CD4-positive, alpha-beta memory T cell (primary cell): ENCODE measurements at regions of chr17 and their contacts with region 1.

Region 1: GRCh38 chr17:5281814-5282653 is at the start of gene RABEP1:
- DNase-seq: peak; percentile 90 to 93 (median 92)
- H3K4me3 ChIP-seq: peak within 1 kb of the TSS; percentile 28 to 54
- H3K4me3 Mint-ChIP-seq: peak within 1 kb of the TSS; percentile 88 to 95 (median 92)
- H3K27ac ChIP-seq: peak within 1 kb of the TSS; percentile 60
- H3K27ac Mint-ChIP-seq: peak within 1 kb of the TSS; percentile 90 to 95 (median 93)
- H3K4me1 ChIP-seq: peaks cover 43% of the 10 kb centered on the region
- H3K4me1 Mint-ChIP-seq: peaks cover 23 to 51% (median 33%) of the 10 kb centered on the region in 4 donors
- H3K27me3 ChIP-seq: no peaks in the 10 kb centered on the region
- H3K27me3 Mint-ChIP-seq: no peaks in the 10 kb centered on the region
- total RNA-seq, gene RABEP1: 53.9 to 54.2 TPM

Region 2: GRCh38 chr17:5264893-5265292 is 17.1 kb before region 1 on chr17:
- CTCF ChIA-PET with region 1: no interaction called
- POLR2A ChIA-PET with region 1: no interaction called
- intact Hi-C with region 1: no loop called
- DNase-seq: no peak
- H3K4me3 ChIP-seq: no peak overlapping the region
- H3K4me3 Mint-ChIP-seq: no peak overlapping the region
- H3K27ac ChIP-seq: no peak overlapping the region
- H3K27ac Mint-ChIP-seq: no peak overlapping the region
- H3K4me1 ChIP-seq: no peaks in the 10 kb centered on the region
- H3K4me1 Mint-ChIP-seq: no peaks in the 10 kb centered on the region
- H3K27me3 ChIP-seq: no peaks in the 10 kb centered on the region
- H3K27me3 Mint-ChIP-seq: no peaks in the 10 kb centered on the region

Region 3: DNA sequence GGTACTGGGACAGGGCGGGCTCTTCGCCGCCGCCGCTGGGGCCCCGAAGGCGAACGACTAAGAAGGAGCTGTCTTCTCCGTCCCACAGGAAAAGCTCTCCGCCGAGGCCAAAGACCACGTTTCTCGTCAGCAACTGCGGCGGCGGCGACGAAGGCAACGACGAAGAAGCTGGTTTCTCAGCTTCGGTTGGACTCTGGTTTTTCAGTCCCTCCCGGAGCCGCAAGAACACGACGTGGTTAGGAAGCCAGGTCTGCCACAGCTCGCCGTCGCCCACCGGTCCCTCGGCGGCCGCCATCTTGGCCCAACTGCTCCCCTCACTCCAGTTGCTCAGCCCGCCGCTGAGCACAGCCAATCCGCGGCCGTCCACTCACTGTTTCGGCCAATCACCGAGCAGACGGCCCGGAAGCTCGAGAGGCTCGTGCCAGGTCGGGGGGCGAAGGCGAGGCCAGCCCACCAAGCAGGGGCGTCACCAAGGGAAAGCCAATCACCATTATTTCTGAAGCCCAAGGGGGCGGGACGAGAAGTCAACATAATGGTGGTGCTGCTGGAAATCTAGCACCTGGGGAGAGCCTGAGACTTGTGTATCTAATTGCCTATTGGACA is 137.4 kb after region 1 on chr17 and contains the start of gene NUP88:
- CTCF ChIA-PET with region 1: no interaction called
- POLR2A ChIA-PET with region 1: interaction called, 7 read pairs
- intact Hi-C with region 1: loop called (anchors 1 kb)
- DNase-seq: peak; percentile 92 to 97 (median 95)
- H3K4me3 ChIP-seq: peak within 1 kb of the TSS; percentile 82 to 99
- H3K4me3 Mint-ChIP-seq: peak within 1 kb of the TSS; percentile 97 to 99 (median 99)
- H3K27ac ChIP-seq: peak within 1 kb of the TSS; percentile 96
- H3K27ac Mint-ChIP-seq: peak within 1 kb of the TSS; percentile 97 to 100 (median 99)
- H3K4me1 ChIP-seq: peaks cover 48% of the 10 kb centered on the region
- H3K4me1 Mint-ChIP-seq: peaks cover 20 to 64% (median 40%) of the 10 kb centered on the region in 4 donors
- H3K27me3 ChIP-seq: no peaks in the 10 kb centered on the region
- H3K27me3 Mint-ChIP-seq: peaks cover 0 to 1% of the 10 kb centered on the region in 2 donors
- total RNA-seq, gene NUP88: 91.0 to 92.5 TPM